ENCODE measurements at regions of chr6 and their contacts with region 1.

Region 1: DNA sequence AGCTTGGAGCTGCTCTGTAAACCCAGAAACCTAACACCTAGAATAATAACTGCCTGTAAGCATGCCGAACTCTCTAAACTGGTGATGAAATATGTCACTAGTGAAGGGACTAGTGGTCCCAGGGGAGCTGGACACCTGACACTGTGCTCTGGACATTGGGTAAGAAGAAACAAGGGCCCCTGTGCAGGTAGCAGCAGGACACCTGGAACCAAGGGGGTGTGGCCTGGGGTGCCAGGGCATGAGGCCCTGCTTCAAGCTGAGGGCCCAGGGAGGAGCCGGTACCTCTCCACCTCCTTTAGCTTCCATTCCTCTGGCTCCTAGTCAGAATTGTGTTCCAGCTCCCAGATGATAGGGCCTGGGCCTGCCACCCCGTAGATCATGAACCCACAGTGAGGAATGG is 263.2 kb downstream of the OGFRL1 start:
- DNase-seq: no peak
- H3K4me3 ChIP-seq: no peak overlapping the region
- H3K27ac ChIP-seq: no peak overlapping the region
- H3K4me1 ChIP-seq: no peaks in the 10 kb centered on the region
- H3K27me3 ChIP-seq: no peaks in the 10 kb centered on the region
- CTCF ChIP-seq: no peak
- EP300 ChIP-seq: no peak
- POLR2A ChIP-seq: no peak
- RAD21 ChIP-seq: no peak

Region 2: DNA sequence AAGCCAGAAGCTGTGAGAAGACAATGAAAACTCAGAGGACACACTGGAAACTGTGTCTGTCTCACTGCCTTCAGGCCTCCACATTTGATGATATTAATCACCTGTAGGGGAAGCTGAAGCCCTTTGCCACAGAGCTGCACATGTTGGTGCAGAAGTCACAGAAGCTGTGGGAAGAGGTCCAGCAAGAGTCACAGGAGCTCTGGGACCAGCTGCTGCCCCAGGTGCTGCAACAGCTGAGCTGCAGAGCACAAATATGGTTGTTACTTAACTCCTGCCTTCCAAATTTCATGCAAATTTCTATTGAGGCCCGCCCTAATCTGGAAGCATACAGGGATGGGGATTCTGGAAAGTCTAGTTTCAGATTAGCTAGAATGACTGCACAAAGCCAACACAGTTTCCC is 93.9 kb before region 1 on chr6:
- CTCF ChIA-PET with region 1: no interaction called
- POLR2A ChIA-PET with region 1: no interaction called
- DNase-seq: no peak
- H3K4me3 ChIP-seq: no peak overlapping the region
- H3K27ac ChIP-seq: no peak overlapping the region
- H3K4me1 ChIP-seq: no peaks in the 10 kb centered on the region
- H3K27me3 ChIP-seq: no peaks in the 10 kb centered on the region
- CTCF ChIP-seq: no peak
- EP300 ChIP-seq: no peak
- POLR2A ChIP-seq: no peak
- RAD21 ChIP-seq: no peak

Region 3: DNA sequence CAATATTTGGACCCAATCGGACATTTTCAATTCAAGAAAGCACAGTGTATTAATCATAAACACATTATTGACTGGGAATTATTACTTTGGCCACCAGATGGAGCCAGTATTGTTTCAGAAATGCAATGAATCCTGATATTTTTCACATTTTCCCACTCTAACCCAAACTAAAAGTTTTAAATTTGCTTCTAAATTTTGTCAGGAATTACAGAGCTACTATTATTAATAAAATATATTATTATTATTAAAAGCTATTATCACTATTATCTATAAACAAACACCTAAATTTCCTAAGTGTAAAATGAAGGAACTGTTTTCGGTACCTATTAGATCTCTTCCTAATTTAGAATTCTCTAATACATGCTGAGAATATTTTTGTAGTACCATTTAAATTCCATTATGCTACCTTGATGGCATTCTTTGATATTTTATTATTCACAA is 17.8 kb before region 1 on chr6:
- CTCF ChIA-PET with region 1: interaction called, 13 read pairs
- POLR2A ChIA-PET with region 1: no interaction called
- DNase-seq: no peak
- H3K4me3 ChIP-seq: no peak overlapping the region
- H3K27ac ChIP-seq: no peak overlapping the region
- H3K4me1 ChIP-seq: no peaks in the 10 kb centered on the region; a peak in 2 of 7 replicates
- H3K27me3 ChIP-seq: no peaks in the 10 kb centered on the region
- CTCF ChIP-seq: peak in 2 of 3 experiments; percentile 17 to 40; a peak in 2 of 4 replicates
- EP300 ChIP-seq: no peak
- POLR2A ChIP-seq: no peak
- RAD21 ChIP-seq: peak; percentile 57 to 62

Measured in H1 (cell line).